ENCODE measurements at regions of chr7 and their contacts with region 1.

Region 1: DNA sequence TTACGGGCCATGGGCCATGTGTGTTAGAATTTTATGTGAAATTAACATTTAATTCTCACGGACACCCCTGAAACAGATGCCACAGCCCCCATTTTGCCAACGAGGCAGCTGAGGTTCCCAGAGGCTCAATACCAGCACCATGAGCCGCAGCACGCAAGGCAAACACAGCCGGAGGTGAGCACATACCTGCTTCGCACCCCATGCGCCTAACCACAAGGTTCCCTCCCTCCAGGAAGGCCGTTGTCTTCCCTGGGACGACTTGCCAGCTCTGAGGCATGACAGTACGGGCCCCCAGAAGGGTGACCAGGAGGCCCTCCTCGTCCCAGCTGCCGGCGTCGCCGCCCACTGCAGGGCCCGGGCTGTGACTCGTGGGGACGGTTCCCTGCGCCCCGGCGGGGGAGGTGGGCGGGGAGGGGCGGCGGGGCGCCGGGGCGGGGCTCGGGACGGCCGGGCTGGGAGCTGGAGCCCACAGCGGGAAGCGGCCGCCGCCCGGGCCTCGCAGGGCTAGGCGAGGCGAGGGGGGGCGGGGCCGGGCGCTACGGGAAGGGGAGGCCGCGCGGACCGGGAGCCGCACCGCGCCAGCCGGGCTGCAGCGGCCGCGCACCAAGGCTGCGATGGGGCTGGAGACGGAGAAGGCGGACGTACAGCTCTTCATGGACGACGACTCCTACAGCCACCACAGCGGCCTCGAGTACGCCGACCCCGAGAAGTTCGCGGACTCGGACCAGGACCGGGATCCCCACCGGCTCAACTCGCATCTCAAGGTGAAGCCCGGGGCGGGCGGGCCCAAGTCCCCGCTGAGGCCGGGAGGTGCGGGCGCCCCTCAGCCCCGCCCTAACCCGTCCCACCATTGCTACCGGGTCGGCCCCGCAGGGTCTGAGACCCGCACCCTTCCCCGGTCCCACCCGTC is at the start of gene CAV2:
- DNase-seq: peak; percentile 82 to 92 (median 92)
- ATAC-seq: peak; percentile 92 to 93
- H3K4me3 ChIP-seq: peak within 1 kb of the TSS; percentile 67
- H3K27ac ChIP-seq: peak within 1 kb of the TSS; percentile 95
- H3K4me1 ChIP-seq: peaks cover 4% of the 10 kb centered on the region
- H3K27me3 ChIP-seq: no peaks in the 10 kb centered on the region
- total RNA-seq, gene CAV2: 179 to 233 (median 200) TPM

Region 2: GRCh38 chr7:116138202-116138801 is 361.1 kb before region 1 on chr7:
- intact Hi-C with region 1: no loop called
- DNase-seq: no peak
- ATAC-seq: peak; percentile 79 to 85
- H3K4me3 ChIP-seq: no peak overlapping the region
- H3K27ac ChIP-seq: no peak overlapping the region
- H3K4me1 ChIP-seq: no peaks in the 10 kb centered on the region
- H3K27me3 ChIP-seq: no peaks in the 10 kb centered on the region

Region 3: DNA sequence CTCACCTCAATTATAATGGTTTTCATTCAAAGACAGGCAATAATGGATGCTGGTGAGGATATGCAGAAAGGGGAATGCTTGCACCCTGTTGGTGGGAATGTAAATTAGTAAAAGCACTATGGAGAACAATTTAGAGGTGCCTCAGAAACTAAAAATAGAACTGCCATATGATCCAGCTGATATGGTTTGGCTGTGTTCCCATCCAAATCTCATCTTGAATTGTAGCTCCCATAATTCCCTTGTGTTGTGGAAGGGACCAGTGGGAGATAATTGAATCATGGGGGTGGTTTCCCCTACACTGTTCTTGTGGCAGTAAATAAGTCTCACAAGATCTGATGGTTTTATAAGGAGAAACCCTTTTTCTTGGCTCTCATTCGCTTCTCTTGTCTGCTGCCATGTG is 201.4 kb before region 1 on chr7:
- intact Hi-C with region 1: no loop called
- DNase-seq: no peak
- ATAC-seq: no peak
- H3K4me3 ChIP-seq: no peak overlapping the region
- H3K27ac ChIP-seq: no peak overlapping the region
- H3K4me1 ChIP-seq: no peaks in the 10 kb centered on the region
- H3K27me3 ChIP-seq: no peaks in the 10 kb centered on the region

Region 4: GRCh38 chr7:116354546-116355408 is 144.6 kb before region 1 on chr7:
- intact Hi-C with region 1: loop called in 1 of 4 experiments (anchors 5 kb)
- DNase-seq: peak; percentile 81 to 91 (median 87)
- ATAC-seq: peak; percentile 91
- H3K4me3 ChIP-seq: peak overlapping the region; percentile 26
- H3K27ac ChIP-seq: peak overlapping the region; percentile 99
- H3K4me1 ChIP-seq: peaks cover 9% of the 10 kb centered on the region
- H3K27me3 ChIP-seq: no peaks in the 10 kb centered on the region

Region 5: GRCh38 chr7:116395125-116395791 is 104.2 kb before region 1 on chr7:
- intact Hi-C with region 1: no loop called
- DNase-seq: no peak
- ATAC-seq: peak; percentile 66 to 80
- H3K4me3 ChIP-seq: no peak overlapping the region
- H3K27ac ChIP-seq: peak overlapping the region; percentile 17
- H3K4me1 ChIP-seq: peaks cover 2% of the 10 kb centered on the region
- H3K27me3 ChIP-seq: no peaks in the 10 kb centered on the region

Region 6: GRCh38 chr7:116443101-116443523 is 56.3 kb before region 1 on chr7:
- intact Hi-C with region 1: loop called in 1 of 4 experiments (anchors 10 kb)
- DNase-seq: no peak
- ATAC-seq: peak in 1 of 2 donors; percentile 62
- H3K4me3 ChIP-seq: no peak overlapping the region
- H3K27ac ChIP-seq: no peak overlapping the region
- H3K4me1 ChIP-seq: peaks cover 2% of the 10 kb centered on the region
- H3K27me3 ChIP-seq: no peaks in the 10 kb centered on the region

Region 7: GRCh38 chr7:116671681-116672595 is 172.5 kb after region 1 on chr7 and contains the start of gene MET:
- intact Hi-C with region 1: no loop called
- DNase-seq: peak; percentile 72 to 86 (median 85)
- ATAC-seq: peak; percentile 90 to 94
- H3K4me3 ChIP-seq: peak within 1 kb of the TSS; percentile 55
- H3K27ac ChIP-seq: peak within 1 kb of the TSS; percentile 61
- H3K4me1 ChIP-seq: no peaks in the 10 kb centered on the region
- H3K27me3 ChIP-seq: no peaks in the 10 kb centered on the region
- total RNA-seq, gene MET: 8.4 to 20.0 (median 14.7) TPM